B cell (primary cell): ENCODE measurements at regions of chr7 and their contacts with region 1.

Region 1: DNA sequence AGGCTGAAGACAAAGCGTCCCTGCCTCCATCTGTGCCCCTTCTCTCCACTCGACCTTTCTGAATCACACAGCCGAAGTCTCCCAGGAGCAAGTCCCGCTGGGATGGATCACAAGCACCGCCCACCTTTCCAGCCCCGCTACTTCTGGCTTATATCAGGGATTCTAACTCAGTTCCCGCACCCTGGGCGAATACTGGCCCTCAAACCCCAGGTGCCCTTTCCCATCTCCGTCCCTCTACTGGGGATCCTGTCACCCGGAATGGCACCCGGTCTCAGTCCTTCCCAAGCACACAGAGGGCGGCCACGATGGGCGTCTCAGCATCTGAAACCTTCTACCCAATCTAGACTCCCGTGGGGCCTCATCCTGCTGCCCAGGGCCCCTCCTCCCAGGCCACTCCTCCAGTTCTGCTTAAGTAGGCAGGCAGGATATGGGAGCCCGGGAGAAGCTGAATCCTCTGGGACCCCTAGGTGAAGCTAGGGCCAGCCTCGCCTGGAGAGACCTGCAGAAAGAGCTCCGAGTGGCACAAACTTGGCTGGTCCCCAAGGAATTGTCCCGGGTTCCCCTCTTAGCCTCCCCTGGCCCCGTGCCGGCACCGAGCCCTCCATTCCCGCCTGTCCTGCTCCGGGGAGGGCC is 768 bp downstream of the KCP start:
- DNase-seq: no peak
- ATAC-seq: no peak
- H3K4me3 ChIP-seq: no peak overlapping the region
- H3K4me3 Mint-ChIP-seq: peak overlapping the region; percentile 32
- H3K27ac ChIP-seq: no peak overlapping the region
- H3K27ac Mint-ChIP-seq: no peak overlapping the region
- H3K4me1 ChIP-seq: peaks cover 21 to 22% of the 10 kb centered on the region in 2 donors
- H3K4me1 Mint-ChIP-seq: peaks cover 20% of the 10 kb centered on the region
- H3K27me3 ChIP-seq: peaks cover 0 to 37% (median 16%) of the 10 kb centered on the region in 4 experiments
- H3K27me3 Mint-ChIP-seq: peaks cover 34% of the 10 kb centered on the region
- CTCF ChIP-seq: no peak

Region 2: GRCh38 chr7:128954830-128955802 is 45.4 kb after region 1 on chr7:
- CTCF ChIA-PET with region 1: interaction called, 5 read pairs
- POLR2A ChIA-PET with region 1: no interaction called
- intact Hi-C with region 1: loop called (anchors 2 kb)
- DNase-seq: peak; percentile 82
- ATAC-seq: peak; percentile 85
- H3K4me3 ChIP-seq: peak overlapping the region in 4 of 5 experiments; percentile 4 to 56 (median 33)
- H3K4me3 Mint-ChIP-seq: peak overlapping the region; percentile 80
- H3K27ac ChIP-seq: peak overlapping the region; percentile 85 to 92
- H3K27ac Mint-ChIP-seq: peak overlapping the region; percentile 95
- H3K4me1 ChIP-seq: peaks cover 17 to 21% of the 10 kb centered on the region in 2 donors
- H3K4me1 Mint-ChIP-seq: peaks cover 49% of the 10 kb centered on the region
- H3K27me3 ChIP-seq: no peaks in the 10 kb centered on the region
- H3K27me3 Mint-ChIP-seq: no peaks in the 10 kb centered on the region
- CTCF ChIP-seq: peak; percentile 48